Endothelial cell of umbilical vein (primary cell): ENCODE measurements at regions of chr2 and their contacts with region 1.

Region 1: DNA sequence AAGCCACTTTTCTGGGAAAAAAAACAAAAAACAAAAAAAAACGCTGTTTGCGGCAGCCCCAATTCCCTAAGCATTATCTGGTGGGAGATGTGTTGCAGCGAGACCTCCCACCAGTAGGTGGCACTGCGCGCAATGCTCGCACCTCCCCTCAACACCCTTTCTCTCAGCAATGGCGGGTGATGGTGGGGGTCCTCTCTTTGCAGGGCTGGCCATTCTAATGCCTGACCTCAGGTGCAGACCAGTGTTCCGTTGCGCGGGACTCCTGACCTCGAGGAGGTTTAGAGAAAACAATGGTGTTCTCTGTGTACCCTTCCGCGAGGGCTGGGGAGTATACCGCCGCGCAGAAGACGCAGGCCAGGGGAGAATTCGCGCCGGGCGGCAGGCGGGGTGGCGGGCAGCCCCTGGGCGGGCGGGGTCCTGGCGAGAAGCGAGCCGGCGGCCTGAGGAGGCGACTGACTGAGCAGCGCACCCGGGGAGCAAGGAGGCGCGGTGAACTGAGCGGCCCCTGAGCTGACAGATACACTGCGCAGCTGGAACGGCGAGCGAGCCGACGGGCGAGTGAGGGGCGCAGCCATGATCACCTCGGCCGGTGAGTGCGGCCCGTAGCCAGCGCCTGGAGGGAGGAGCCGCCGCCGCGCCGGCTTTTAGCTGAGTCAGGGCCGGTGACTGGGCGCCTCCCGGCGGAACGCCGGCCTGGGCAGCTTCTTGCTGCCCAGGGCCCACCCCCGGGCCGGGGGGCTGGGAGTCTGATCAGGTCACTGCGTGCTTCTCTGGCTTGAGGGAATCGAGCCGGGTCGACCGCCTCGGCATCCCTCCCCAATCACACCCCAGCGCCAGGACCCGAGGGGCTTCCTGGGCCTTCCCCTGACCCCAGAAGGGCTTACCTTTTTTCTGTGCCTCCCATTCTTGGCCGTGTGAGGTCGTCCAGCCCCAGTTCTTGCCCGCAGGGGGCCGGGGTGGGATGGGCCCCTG is at the start of gene PSMD1:
- DNase-seq: peak; percentile 95
- H3K4me3 ChIP-seq: peak within 1 kb of the TSS; percentile 98 to 99 (median 99)
- H3K27ac ChIP-seq: peak within 1 kb of the TSS; percentile 86
- H3K4me1 ChIP-seq: peaks cover 24% of the 10 kb centered on the region
- H3K27me3 ChIP-seq: peaks cover 0 to 3% of the 10 kb centered on the region in 2 experiments
- CTCF ChIP-seq: peak; percentile 97 to 98
- POLR2A ChIP-seq: peak; percentile 71
- total RNA-seq, gene PSMD1: 156 and 163 TPM in 2 replicates

Region 2: GRCh38 chr2:230847883-230848388 is 208.8 kb before region 1 on chr2:
- CTCF ChIA-PET with region 1: interaction called, 6 read pairs
- POLR2A ChIA-PET with region 1: no interaction called
- dilution Hi-C with region 1: no loop called
- intact Hi-C with region 1: loop called (anchors 1 kb)
- DNase-seq: peak; percentile 78
- H3K4me3 ChIP-seq: no peak overlapping the region
- H3K27ac ChIP-seq: no peak overlapping the region
- H3K4me1 ChIP-seq: no peaks in the 10 kb centered on the region
- H3K27me3 ChIP-seq: peaks cover 7% of the 10 kb centered on the region in 2 experiments
- CTCF ChIP-seq: peak; percentile 96 to 97
- POLR2A ChIP-seq: no peak

Region 3: GRCh38 chr2:230902180-230902899 is 154.4 kb before region 1 on chr2:
- CTCF ChIA-PET with region 1: interaction called, 9 read pairs
- POLR2A ChIA-PET with region 1: no interaction called
- dilution Hi-C with region 1: no loop called
- intact Hi-C with region 1: loop called (anchors 2 kb)
- DNase-seq: no peak
- H3K4me3 ChIP-seq: no peak overlapping the region
- H3K27ac ChIP-seq: no peak overlapping the region
- H3K4me1 ChIP-seq: no peaks in the 10 kb centered on the region
- H3K27me3 ChIP-seq: peaks cover 0 to 2% of the 10 kb centered on the region in 2 experiments
- CTCF ChIP-seq: peak; percentile 59 to 62
- POLR2A ChIP-seq: no peak

Region 4: DNA sequence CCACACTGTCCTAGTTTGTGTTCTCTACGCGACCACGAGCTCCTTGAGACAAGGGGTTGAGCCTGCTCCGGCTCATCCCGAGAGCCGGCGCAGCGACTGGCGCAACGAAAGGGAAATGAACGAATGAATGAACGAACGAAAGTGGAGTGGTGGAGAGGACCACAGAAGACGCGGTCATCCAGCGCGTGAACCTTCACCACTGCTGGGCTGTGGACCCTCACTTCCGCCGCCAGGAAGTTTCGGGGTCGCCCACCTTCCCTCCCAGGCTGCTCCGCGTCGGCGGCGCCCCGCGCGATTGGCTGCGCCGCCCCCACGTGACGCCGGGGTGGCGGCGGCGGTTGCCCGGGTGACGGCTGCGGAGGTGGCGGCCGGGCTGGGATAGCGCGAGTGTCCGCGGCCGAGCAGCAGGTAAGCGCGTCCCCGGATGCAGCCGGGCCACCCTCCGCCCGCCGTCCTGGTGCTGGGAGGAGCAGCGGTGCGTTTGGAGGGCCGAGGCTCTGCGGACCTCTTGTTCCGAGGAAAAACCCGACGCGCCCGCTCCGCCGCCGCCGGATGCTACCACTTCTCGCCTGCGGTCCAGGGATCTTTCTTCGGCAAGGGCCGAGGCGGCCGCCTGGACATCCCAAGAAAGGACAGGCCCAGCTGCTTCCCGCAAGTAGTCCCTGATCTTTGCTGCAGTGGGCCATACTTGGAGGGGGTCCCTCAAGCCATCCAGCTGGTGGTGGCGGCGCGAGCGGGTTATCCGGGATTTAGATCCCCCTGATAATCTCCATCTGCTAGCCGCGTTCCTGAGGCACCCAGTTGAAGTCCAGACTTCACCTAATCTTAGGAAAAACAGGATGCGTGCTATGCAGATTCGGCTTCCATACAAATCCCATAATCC is 141.8 kb after region 1 on chr2 and contains the start of gene ARMC9:
- CTCF ChIA-PET with region 1: interaction called, 3 read pairs
- POLR2A ChIA-PET with region 1: no interaction called
- dilution Hi-C with region 1: no loop called
- intact Hi-C with region 1: loop called (anchors 1 kb)
- DNase-seq: peak; percentile 68
- H3K4me3 ChIP-seq: peak within 1 kb of the TSS; percentile 60 to 91 (median 81)
- H3K27ac ChIP-seq: peak within 1 kb of the TSS; percentile 0
- H3K4me1 ChIP-seq: peaks cover 13% of the 10 kb centered on the region
- H3K27me3 ChIP-seq: no peaks in the 10 kb centered on the region
- CTCF ChIP-seq: no peak
- POLR2A ChIP-seq: peak; percentile 90
- total RNA-seq, gene ARMC9: 19.3 and 24.2 TPM in 2 replicates

Region 5: GRCh38 chr2:231348173-231348572 is 291.4 kb after region 1 on chr2:
- CTCF ChIA-PET with region 1: no interaction called
- POLR2A ChIA-PET with region 1: no interaction called
- dilution Hi-C with region 1: no loop called
- intact Hi-C with region 1: no loop called
- DNase-seq: no peak
- H3K4me3 ChIP-seq: no peak overlapping the region
- H3K27ac ChIP-seq: no peak overlapping the region
- H3K4me1 ChIP-seq: no peaks in the 10 kb centered on the region
- H3K27me3 ChIP-seq: no peaks in the 10 kb centered on the region
- CTCF ChIP-seq: no peak
- POLR2A ChIP-seq: no peak